Natural killer cell (primary cell): ENCODE measurements at regions of chr3 and their contacts with region 1.

Region 1: DNA sequence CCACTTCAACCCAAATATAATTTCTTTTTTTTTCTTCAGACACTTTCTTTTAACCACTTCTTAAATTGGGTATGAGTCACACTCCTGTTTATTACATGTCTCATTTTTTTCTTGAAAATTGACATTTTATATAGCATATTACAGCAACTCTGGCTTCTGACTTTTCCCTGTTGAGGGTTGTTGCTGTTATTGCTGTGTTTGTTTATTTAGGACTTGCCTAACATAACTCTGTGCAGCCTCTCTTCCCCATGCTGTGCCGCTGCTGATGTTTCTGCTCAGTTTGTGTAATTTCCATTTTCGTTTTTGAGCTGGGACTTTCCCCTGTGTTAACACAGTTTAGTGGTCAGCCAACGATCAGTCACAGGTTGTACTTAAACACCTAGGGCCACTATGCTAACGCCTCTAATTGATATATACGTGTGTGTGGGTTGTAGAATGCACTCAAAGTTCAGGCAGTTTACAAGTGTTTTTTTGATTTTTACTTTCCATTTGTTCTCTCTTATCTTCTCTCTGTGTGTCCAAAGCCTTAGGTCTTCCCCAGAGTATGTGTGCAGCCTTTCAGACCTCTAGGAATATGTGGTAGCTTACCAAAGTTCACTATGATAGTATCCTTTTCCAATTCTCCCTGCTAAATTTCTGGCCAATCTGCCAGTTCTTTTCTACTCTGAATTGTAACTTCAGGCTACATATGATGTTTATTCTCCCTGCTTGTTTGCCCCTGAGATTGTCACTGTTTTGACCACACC is 337.2 kb downstream of the ZBTB20 start:
- DNase-seq: peak; percentile 51 to 60
- ATAC-seq: peak; percentile 93 to 98 (median 98)
- H3K4me3 ChIP-seq: no peak overlapping the region
- H3K4me3 Mint-ChIP-seq: peak overlapping the region; percentile 35
- H3K27ac ChIP-seq: peak overlapping the region; percentile 80
- H3K27ac Mint-ChIP-seq: peak overlapping the region; percentile 78 to 82
- H3K4me1 ChIP-seq: peaks cover 6% of the 10 kb centered on the region
- H3K4me1 Mint-ChIP-seq: peaks cover 16 to 19% of the 10 kb centered on the region in 2 donors
- H3K27me3 ChIP-seq: no peaks in the 10 kb centered on the region
- H3K27me3 Mint-ChIP-seq: no peaks in the 10 kb centered on the region
- CTCF ChIP-seq: no peak

Region 2: GRCh38 chr3:114213627-114214541 is 596.0 kb before region 1 on chr3:
- intact Hi-C with region 1: loop called (anchors 10 kb)
- DNase-seq: peak; percentile 73 to 88
- ATAC-seq: peak; percentile 61 to 77 (median 63)
- H3K4me3 ChIP-seq: peak overlapping the region; percentile 46
- H3K4me3 Mint-ChIP-seq: no peak overlapping the region
- H3K27ac ChIP-seq: peak overlapping the region; percentile 97
- H3K27ac Mint-ChIP-seq: no peak overlapping the region
- H3K4me1 ChIP-seq: peaks cover 63% of the 10 kb centered on the region
- H3K4me1 Mint-ChIP-seq: no peaks in the 10 kb centered on the region
- H3K27me3 ChIP-seq: no peaks in the 10 kb centered on the region
- H3K27me3 Mint-ChIP-seq: no peaks in the 10 kb centered on the region
- CTCF ChIP-seq: peak; percentile 12

Region 3: DNA sequence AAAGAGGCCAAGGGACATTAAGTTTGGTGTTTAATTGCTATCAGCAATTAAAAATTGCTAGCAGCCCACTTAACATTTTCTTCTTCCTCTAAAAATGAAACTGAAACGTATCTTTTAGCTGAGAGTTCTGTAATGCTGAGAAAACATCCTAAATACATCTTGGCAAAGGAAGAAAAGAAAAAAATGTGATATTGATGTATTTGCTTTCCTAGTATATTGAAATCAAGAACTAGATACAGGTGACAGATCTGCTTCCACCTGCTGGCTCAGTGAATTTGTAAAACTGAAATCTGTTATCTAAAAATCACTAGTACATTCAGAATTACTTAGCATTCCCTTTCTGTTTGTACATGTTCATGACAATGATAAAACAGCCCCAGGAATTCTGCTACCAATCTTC is 54.0 kb after region 1 on chr3:
- intact Hi-C with region 1: loop called (anchors 5 kb)
- DNase-seq: peak in 1 of 2 donors; percentile 10
- ATAC-seq: peak in 2 of 3 donors; percentile 48 to 64
- H3K4me3 ChIP-seq: peak overlapping the region; percentile 21
- H3K4me3 Mint-ChIP-seq: peak overlapping the region; percentile 85
- H3K27ac ChIP-seq: peak overlapping the region; percentile 69
- H3K27ac Mint-ChIP-seq: peak overlapping the region; percentile 86 to 90
- H3K4me1 ChIP-seq: no peaks in the 10 kb centered on the region
- H3K4me1 Mint-ChIP-seq: peaks cover 16 to 29% of the 10 kb centered on the region in 2 donors
- H3K27me3 ChIP-seq: no peaks in the 10 kb centered on the region
- H3K27me3 Mint-ChIP-seq: no peaks in the 10 kb centered on the region
- CTCF ChIP-seq: no peak

Region 4: GRCh38 chr3:114892135-114892879 is 82.5 kb after region 1 on chr3:
- intact Hi-C with region 1: no loop called
- DNase-seq: no peak
- ATAC-seq: no peak
- H3K4me3 ChIP-seq: no peak overlapping the region
- H3K4me3 Mint-ChIP-seq: no peak overlapping the region
- H3K27ac ChIP-seq: no peak overlapping the region
- H3K27ac Mint-ChIP-seq: no peak overlapping the region
- H3K4me1 ChIP-seq: no peaks in the 10 kb centered on the region
- H3K4me1 Mint-ChIP-seq: peaks cover 6 to 7% of the 10 kb centered on the region in 2 donors
- H3K27me3 ChIP-seq: no peaks in the 10 kb centered on the region
- H3K27me3 Mint-ChIP-seq: no peaks in the 10 kb centered on the region
- CTCF ChIP-seq: no peak